Dendritic cell treated with granulocyte-macrophage colony-stimulating factor and Interleukin-4, amounts not matched to agents 40 ng/mL and 50 ng/mL, for 4 days (primary cell): ENCODE measurements at regions of chr9 and their contacts with region 1.

Region 1: DNA sequence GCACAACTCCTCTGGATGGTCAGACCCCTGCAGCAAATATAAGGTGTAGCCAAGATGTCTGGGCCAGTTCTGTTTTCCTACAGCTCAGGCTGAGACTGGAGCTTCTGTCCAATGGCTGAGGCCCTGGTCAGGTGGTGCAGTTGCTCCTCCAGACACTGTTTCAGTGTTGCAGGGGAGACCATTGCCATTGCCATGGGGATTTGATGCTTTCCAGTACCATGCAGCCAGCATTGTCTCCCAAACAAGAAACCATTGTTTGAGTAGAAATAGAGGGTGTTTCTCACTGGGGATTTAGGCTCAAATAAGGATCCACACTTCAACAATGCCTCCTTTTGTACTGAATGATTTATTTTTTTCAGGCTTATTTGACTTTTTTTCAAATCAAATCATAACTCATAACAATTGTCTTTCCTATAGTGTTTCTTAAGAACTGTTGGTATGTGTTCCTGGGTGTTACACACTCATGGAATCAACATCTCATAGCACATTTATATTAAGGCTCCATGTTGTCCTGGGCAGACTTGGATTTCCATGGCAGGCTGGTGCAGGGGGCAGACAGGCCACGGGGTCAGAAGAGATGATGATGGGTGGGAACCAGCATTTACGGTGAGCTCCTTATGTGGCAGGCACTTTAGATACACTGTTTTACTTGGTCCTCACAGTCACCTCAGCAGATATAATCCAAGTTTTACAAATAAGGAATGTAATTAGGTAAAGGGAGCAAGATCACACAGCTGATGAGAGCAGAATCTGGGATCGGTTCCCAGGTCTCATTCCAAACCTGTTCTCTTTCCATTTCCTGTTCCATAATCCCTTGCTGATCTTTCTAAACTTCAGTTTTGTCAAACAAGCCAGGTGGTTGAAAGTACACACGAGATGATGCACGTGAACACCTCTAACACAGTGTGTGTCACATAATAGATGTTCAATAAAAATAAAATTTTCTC is 95.9 kb upstream of the GNAQ start:
- H3K4me3 Mint-ChIP-seq: no peak overlapping the region
- H3K27ac Mint-ChIP-seq: no peak overlapping the region
- H3K4me1 Mint-ChIP-seq: peaks cover 13% of the 10 kb centered on the region
- H3K27me3 Mint-ChIP-seq: peaks cover 8% of the 10 kb centered on the region

Region 2: DNA sequence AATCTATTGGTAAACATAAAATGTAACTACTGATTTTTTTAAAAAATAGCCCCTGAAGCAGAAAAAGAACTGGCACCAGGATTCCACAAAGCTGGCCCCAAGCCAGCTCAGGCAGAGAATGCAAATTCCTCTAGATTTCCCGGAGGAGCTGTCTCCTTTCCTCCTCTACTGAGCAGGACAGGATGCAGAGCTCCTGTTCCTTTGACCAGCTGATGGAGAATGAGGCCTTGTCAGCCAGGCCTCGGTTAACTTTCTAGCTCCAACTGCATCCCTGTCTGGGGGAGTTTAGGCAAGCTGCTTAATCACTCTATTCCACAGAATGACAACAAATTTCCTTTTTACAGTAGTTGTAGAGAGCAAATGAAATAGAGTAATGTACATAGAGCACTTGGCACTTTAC is 251.5 kb before region 1 on chr9:
- intact Hi-C with region 1: loop called (anchors 5 kb)
- H3K4me3 Mint-ChIP-seq: no peak overlapping the region
- H3K27ac Mint-ChIP-seq: no peak overlapping the region
- H3K4me1 Mint-ChIP-seq: peaks cover 33% of the 10 kb centered on the region
- H3K27me3 Mint-ChIP-seq: no peaks in the 10 kb centered on the region

Region 3: DNA sequence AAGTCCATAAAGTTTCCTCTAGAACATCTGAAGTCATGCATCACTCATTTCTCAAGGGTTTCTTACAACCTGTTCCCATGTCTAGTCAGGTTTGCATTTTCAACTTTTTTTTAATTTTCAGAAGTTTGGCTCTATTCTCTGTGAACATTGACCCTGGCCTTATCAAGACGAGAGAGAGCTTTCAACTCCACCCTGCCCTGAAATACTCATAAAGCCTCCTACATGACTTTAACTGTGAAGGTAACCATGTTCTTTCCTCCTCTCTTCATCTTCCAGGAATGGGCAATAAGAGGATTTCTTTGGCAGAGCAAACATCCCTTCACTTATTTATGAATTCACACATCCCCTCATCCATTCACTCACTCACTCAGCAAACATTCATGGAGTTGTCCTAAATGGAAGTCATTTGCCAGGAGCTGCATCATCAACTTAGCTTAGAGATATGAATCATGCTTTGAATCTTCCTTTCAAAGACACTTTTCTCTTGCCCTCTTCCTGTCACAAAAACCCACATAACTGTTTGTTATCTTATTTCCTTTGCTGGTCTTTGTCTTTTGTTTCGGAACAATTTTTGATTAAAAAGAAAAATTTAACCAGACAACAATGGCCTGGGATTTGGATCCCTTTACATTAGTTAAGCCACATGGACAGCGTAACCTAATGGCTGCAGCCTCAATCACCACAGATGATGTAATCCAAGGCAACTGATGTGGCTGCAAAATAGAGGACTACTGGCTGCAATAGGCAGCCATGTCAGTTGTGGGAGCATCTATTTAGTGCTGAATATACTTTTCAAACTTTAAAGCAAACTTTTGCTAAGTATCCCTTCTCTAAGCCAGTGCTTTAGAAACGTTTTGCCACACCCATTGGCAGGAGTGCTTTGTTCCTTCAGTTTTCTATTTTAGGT is 52.9 kb before region 1 on chr9:
- intact Hi-C with region 1: no loop called
- H3K4me3 Mint-ChIP-seq: no peak overlapping the region
- H3K27ac Mint-ChIP-seq: no peak overlapping the region
- H3K4me1 Mint-ChIP-seq: peaks cover 23% of the 10 kb centered on the region
- H3K27me3 Mint-ChIP-seq: peaks cover 1% of the 10 kb centered on the region